A673 (cell line): ENCODE measurements at regions of chr2 and their contacts with region 1.

Region 1: DNA sequence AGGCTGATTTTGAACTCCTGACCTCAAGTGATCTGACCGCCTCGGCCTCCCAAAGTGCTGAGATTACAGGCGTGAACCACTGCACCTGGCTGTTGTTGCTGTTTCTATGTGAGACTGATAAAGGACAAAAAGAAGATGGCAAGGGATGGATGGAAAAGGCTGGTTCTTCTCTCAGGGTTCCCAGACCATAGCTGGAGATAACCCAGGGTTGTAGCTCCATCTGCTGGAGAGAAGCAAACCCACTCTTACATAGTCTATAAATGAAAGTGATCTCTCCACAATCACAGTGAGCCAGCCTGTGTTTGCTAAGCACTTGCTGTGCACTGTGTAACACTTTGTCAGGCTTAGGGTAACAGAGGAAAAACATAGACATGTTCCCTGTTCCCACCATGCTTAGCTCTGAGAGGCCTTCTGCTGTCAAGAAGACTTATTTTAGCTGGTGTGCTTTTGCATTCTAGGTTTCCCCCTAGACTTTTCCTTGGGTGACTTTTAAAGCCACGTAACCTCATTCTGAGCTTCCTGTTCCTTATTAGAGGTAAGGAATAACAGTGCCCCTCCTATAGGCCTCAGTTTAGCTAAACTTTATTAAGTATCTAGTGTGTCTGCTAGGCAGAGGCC is 49.7 kb downstream of the LIMS1 start:
- DNase-seq: peak; percentile 85
- H3K4me3 ChIP-seq: no peak overlapping the region
- H3K27ac ChIP-seq: no peak overlapping the region
- H3K4me1 ChIP-seq: peaks cover 7% of the 10 kb centered on the region
- H3K27me3 ChIP-seq: no peaks in the 10 kb centered on the region
- CTCF ChIP-seq: peak; percentile 82

Region 2: GRCh38 chr2:108215794-108216211 is 368.2 kb before region 1 on chr2:
- CTCF ChIA-PET with region 1: no interaction called
- POLR2A ChIA-PET with region 1: no interaction called
- intact Hi-C with region 1: loop called (anchors 5 kb)
- DNase-seq: peak; percentile 18
- H3K4me3 ChIP-seq: no peak overlapping the region
- H3K27ac ChIP-seq: no peak overlapping the region
- H3K4me1 ChIP-seq: no peaks in the 10 kb centered on the region
- H3K27me3 ChIP-seq: no peaks in the 10 kb centered on the region
- CTCF ChIP-seq: peak; percentile 34; the same call in 1 of the 2 replicates

Region 3: GRCh38 chr2:108351889-108352288 is 232.1 kb before region 1 on chr2:
- CTCF ChIA-PET with region 1: no interaction called
- POLR2A ChIA-PET with region 1: no interaction called
- intact Hi-C with region 1: loop called (anchors 1 kb)
- DNase-seq: no peak
- H3K4me3 ChIP-seq: no peak overlapping the region
- H3K27ac ChIP-seq: no peak overlapping the region
- H3K4me1 ChIP-seq: no peaks in the 10 kb centered on the region
- H3K27me3 ChIP-seq: peaks cover 18% of the 10 kb centered on the region
- CTCF ChIP-seq: no peak

Region 4: DNA sequence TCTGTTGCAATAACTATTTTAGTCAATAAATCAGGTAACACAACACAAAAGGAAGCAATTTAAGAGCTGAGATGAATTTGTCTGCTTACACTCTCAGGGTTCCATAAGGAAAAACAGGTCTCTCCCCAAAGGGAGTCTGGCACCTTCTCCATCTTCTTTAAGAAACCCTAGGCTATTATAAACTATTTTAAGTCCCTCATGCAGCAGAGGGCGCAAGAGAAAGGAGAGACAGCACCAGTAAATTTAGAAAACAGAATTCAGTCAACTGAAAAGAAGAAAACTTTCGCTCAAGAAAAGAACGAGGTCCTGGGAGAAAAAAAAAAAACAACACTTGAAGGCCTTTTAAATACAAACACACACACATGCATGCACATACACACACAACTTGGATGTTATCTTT is 187.2 kb before region 1 on chr2:
- CTCF ChIA-PET with region 1: interaction called, 6 read pairs
- POLR2A ChIA-PET with region 1: no interaction called
- intact Hi-C with region 1: loop called (anchors 2 kb)
- DNase-seq: peak; percentile 54
- H3K4me3 ChIP-seq: no peak overlapping the region
- H3K27ac ChIP-seq: no peak overlapping the region
- H3K4me1 ChIP-seq: no peaks in the 10 kb centered on the region
- H3K27me3 ChIP-seq: peaks cover under 1% of the 10 kb centered on the region
- CTCF ChIP-seq: peak; percentile 50